ENCODE measurements at regions of chrX and their contacts with region 1.

Region 1: GRCh38 chrX:35726176-35726575 is 72.0 kb upstream of the MAGEB16 start:
- DNase-seq: peak; percentile 56
- H3K4me3 Mint-ChIP-seq: no peak overlapping the region
- H3K27ac Mint-ChIP-seq: no peak overlapping the region
- H3K4me1 Mint-ChIP-seq: no peaks in the 10 kb centered on the region
- H3K27me3 Mint-ChIP-seq: peaks cover 61% of the 10 kb centered on the region
- CTCF ChIP-seq: peak; percentile 18

Region 2: GRCh38 chrX:34578237-34578636 is 1147.9 kb before region 1 on chrX:
- CTCF ChIA-PET with region 1: interaction called, 3 read pairs
- POLR2A ChIA-PET with region 1: no interaction called
- intact Hi-C with region 1: loop called (anchors 5 kb)
- DNase-seq: peak; percentile 51
- H3K4me3 Mint-ChIP-seq: no peak overlapping the region
- H3K27ac Mint-ChIP-seq: no peak overlapping the region
- H3K4me1 Mint-ChIP-seq: no peaks in the 10 kb centered on the region
- H3K27me3 Mint-ChIP-seq: peaks cover 16% of the 10 kb centered on the region
- CTCF ChIP-seq: peak; percentile 46

Region 3: DNA sequence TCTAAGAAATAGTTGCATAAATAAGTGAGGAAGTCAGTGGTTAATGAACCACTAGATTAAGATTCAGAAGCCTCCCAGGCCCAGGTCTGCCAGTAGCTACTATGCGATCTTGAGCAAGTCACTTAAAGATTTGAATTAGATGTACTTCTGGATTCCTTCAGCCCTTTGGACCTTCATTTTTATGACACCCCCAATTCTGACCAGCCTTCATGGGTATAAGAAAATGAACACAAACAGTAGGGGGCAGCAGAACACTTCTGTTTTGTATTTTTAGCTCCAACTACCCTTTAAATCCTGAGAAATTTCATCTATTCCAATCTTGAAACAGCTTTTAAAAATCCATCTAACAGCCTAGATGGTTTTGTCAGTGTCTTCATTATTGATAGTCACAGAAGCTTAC is 1088.1 kb before region 1 on chrX:
- CTCF ChIA-PET with region 1: interaction called, 9 read pairs
- POLR2A ChIA-PET with region 1: no interaction called
- intact Hi-C with region 1: loop called (anchors 1 kb)
- DNase-seq: peak; percentile 57
- H3K4me3 Mint-ChIP-seq: no peak overlapping the region
- H3K27ac Mint-ChIP-seq: no peak overlapping the region
- H3K4me1 Mint-ChIP-seq: no peaks in the 10 kb centered on the region
- H3K27me3 Mint-ChIP-seq: peaks cover 32% of the 10 kb centered on the region
- CTCF ChIP-seq: peak; percentile 66

Region 4: DNA sequence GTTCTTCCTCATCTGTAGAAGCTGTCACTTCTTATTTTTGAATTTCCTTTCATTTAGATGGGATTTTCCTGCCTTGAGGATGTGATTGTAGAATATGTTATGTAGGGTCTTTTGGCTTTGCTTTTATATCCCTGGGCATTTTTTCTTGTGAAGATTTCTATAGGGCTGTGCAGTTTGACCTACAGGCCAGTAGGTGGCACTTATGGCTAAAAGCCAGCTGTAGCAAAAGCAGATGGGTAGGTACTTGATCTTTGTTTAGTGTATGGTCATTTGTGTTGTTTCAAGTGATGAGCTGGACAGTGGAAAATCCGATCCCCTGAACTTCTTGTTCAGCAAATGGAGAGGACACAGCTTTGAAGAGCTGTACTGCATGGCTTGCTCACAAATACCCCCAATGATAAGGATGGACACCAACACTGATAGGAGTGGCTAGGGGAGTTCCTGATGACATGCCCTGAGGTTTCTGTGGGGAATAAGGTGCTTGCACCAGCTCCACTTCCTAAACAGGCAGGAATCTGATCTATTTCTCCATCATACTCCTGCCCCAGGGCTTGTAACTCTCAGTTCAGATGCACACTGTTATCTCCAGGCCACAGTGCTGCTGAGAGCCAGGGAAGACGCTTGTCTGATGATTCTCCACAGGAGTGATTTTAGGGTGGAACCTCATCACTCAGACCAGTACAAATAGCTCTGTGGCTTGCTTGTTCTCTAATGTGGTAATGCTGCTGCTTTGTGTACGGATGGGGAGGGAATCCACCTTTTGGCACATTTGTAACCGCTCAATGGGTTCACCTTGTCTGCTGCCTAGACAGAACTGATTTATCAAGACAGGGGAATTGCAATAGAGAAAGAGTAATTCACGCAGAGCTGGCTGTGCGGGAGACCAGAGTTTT is 345.1 kb before region 1 on chrX:
- CTCF ChIA-PET with region 1: interaction called, 14 read pairs
- POLR2A ChIA-PET with region 1: no interaction called
- intact Hi-C with region 1: loop called (anchors 2 kb)
- DNase-seq: peak; percentile 56
- H3K4me3 Mint-ChIP-seq: no peak overlapping the region
- H3K27ac Mint-ChIP-seq: no peak overlapping the region
- H3K4me1 Mint-ChIP-seq: no peaks in the 10 kb centered on the region
- H3K27me3 Mint-ChIP-seq: peaks cover 57% of the 10 kb centered on the region
- CTCF ChIP-seq: peak; percentile 71

Region 5: DNA sequence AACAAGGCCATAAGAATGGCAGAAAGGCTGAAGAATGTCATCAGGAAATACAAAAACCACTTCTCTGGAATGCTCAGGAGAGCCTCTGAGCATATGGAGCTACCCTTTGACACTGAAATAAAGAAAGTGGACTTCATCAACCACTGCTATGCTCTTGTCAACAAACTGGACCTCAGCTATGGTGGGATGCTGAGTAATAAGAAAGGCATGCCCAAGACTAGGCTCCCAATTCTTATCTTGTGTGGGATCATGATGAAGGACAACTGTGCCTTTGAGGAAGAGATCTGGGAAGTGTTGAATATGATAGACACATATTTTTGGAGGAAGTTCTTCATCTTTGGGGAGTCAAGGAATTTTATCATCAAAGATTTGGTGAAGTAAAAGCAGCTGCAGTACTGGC is 14.9 kb before region 1 on chrX:
- CTCF ChIA-PET with region 1: no interaction called
- POLR2A ChIA-PET with region 1: no interaction called
- intact Hi-C with region 1: no loop called
- DNase-seq: no peak
- H3K4me3 Mint-ChIP-seq: no peak overlapping the region
- H3K27ac Mint-ChIP-seq: no peak overlapping the region
- H3K4me1 Mint-ChIP-seq: no peaks in the 10 kb centered on the region
- H3K27me3 Mint-ChIP-seq: peaks cover 12% of the 10 kb centered on the region
- CTCF ChIP-seq: no peak

Measured in MCF 10A (cell line).